ENCODE measurements at regions of chr17 and their contacts with region 1.

Region 1: DNA sequence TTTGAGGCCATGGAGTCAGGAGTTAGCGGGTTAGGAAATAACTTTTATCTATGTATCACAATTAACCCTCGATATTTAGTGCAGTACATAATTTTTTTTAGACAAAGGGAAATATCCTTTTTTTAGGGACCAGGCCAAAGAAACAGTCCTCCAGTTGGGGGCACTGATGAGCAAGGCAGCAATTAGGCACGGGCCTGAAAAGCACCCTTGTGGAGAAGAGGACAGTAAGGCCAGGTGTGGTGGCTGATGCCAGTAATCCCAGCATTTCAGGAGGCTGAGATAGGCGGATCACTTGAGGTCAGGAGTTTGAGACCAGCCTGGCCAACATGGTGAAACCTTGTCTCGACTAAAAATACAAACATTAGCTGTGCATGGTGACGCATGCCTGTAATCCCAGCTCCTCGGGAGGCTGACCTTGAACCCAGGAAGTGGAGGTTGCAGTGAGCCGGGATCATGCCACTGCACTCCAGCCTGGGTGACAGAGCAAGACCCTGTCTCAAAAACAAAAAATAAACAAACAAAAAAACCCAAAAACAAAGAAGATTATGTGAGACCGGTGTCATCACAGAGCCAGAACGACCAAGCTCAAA is 158.3 kb upstream of the NOL11 start:
- DNase-seq: no peak
- ATAC-seq: no peak

Region 2: GRCh38 chr17:67491009-67491680 is 68.3 kb before region 1 on chr17:
- intact Hi-C with region 1: loop called (anchors 10 kb)
- DNase-seq: peak; percentile 94
- ATAC-seq: peak; percentile 98